WTC11 (cell line): ENCODE measurements at regions of chr15 and their contacts with region 1.

Region 1: DNA sequence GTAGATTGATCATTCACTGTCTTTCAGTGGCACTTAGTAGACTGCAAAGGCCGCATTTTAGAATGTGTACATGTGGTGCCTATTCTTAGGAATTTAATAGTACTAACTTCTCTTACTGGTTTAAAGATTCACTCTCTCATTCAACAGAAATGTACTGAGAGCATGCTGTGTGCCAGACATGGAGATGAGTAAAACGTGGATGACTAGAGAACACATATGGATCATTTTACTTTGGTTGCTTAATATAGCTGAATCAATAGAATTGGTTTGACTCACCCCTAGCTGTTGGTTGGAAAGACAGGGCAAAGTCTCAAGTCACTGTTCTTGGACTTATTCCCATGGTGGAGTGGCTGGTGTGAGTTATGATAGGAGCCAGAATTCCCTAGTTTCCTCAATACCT is 109.1 kb upstream of the TNFAIP8L3 start:
- DNase-seq: no peak
- ATAC-seq: no peak
- H3K4me3 Mint-ChIP-seq: no peak overlapping the region
- H3K27ac Mint-ChIP-seq: no peak overlapping the region
- H3K4me1 Mint-ChIP-seq: peaks cover 10% of the 10 kb centered on the region
- H3K27me3 Mint-ChIP-seq: no peaks in the 10 kb centered on the region
- CTCF ChIP-seq: no peak

Region 2: GRCh38 chr15:51181905-51182304 is 21.9 kb before region 1 on chr15:
- CTCF ChIA-PET with region 1: no interaction called
- POLR2A ChIA-PET with region 1: no interaction called
- DNase-seq: no peak
- ATAC-seq: no peak
- H3K4me3 Mint-ChIP-seq: no peak overlapping the region
- H3K27ac Mint-ChIP-seq: no peak overlapping the region
- H3K4me1 Mint-ChIP-seq: no peaks in the 10 kb centered on the region
- H3K27me3 Mint-ChIP-seq: no peaks in the 10 kb centered on the region; the same call in 1 of the 2 replicates
- CTCF ChIP-seq: no peak

Region 3: DNA sequence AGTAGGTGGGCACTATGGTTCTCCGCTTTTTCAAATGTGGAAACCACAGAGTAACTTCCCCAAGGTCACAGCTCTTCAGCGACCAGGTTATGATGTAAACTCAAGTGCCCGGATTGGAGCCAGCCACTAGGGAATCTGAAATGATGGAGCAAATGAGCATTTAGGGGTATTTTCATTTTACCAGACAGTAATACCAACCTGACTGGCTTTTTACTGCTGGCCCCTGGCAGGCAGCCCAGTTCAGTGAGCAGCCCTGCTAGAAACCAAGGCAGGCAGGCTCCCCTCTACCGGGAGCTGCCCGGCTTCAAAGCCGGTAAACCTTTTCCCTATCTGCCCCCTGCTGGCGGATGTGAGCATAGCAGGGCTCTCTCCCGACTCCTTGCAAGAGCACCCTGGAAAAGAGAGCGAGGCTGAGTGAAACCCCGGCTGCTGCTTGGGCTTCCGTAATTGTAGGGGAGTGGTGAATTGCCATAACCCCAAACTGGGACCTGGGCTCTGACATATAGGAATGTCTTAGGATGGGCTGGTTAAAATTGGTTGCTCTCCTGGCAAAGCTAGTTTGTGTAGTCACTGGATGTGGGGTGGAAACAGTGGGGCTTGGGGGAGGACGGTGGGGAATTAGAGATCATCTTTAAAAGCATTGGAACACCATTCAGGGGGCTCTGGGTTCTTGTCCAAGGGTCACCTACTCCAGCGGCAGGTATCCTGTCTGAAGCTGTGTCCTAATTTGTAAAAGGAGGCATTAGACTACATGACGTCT is 11.1 kb before region 1 on chr15:
- CTCF ChIA-PET with region 1: interaction called, 15 read pairs
- POLR2A ChIA-PET with region 1: interaction called, 3 read pairs
- DNase-seq: peak; percentile 98
- ATAC-seq: peak; percentile 97
- H3K4me3 Mint-ChIP-seq: no peak overlapping the region
- H3K27ac Mint-ChIP-seq: no peak overlapping the region
- H3K4me1 Mint-ChIP-seq: peaks cover 20% of the 10 kb centered on the region
- H3K27me3 Mint-ChIP-seq: no peaks in the 10 kb centered on the region; the same call in 1 of the 2 replicates
- CTCF ChIP-seq: peak; percentile 96